Calu3 (cell line): ENCODE measurements at regions of chr3 and their contacts with region 1.

Region 1: GRCh38 chr3:17841190-17841828 is 98.9 kb upstream of the TBC1D5 start:
- DNase-seq: peak; percentile 85
- H3K4me3 Mint-ChIP-seq: no peak overlapping the region
- H3K27ac Mint-ChIP-seq: no peak overlapping the region
- H3K4me1 Mint-ChIP-seq: no peaks in the 10 kb centered on the region
- H3K27me3 Mint-ChIP-seq: no peaks in the 10 kb centered on the region
- CTCF ChIP-seq: peak; percentile 67

Region 2: GRCh38 chr3:17258823-17259436 is 582.4 kb before region 1 on chr3:
- CTCF ChIA-PET with region 1: no interaction called
- intact Hi-C with region 1: loop called (anchors 2 kb)
- DNase-seq: peak; percentile 3
- H3K4me3 Mint-ChIP-seq: no peak overlapping the region
- H3K27ac Mint-ChIP-seq: no peak overlapping the region
- H3K4me1 Mint-ChIP-seq: no peaks in the 10 kb centered on the region
- H3K27me3 Mint-ChIP-seq: no peaks in the 10 kb centered on the region
- CTCF ChIP-seq: peak; percentile 40

Region 3: GRCh38 chr3:17307482-17307881 is 533.8 kb before region 1 on chr3:
- CTCF ChIA-PET with region 1: no interaction called
- intact Hi-C with region 1: no loop called
- DNase-seq: no peak
- H3K4me3 Mint-ChIP-seq: no peak overlapping the region
- H3K27ac Mint-ChIP-seq: no peak overlapping the region
- H3K4me1 Mint-ChIP-seq: no peaks in the 10 kb centered on the region
- H3K27me3 Mint-ChIP-seq: no peaks in the 10 kb centered on the region
- CTCF ChIP-seq: no peak

Region 4: GRCh38 chr3:17431004-17431403 is 410.3 kb before region 1 on chr3:
- CTCF ChIA-PET with region 1: interaction called, 10 read pairs
- intact Hi-C with region 1: loop called (anchors 1 kb)
- DNase-seq: no peak
- H3K4me3 Mint-ChIP-seq: no peak overlapping the region
- H3K27ac Mint-ChIP-seq: no peak overlapping the region
- H3K4me1 Mint-ChIP-seq: no peaks in the 10 kb centered on the region
- H3K27me3 Mint-ChIP-seq: no peaks in the 10 kb centered on the region
- CTCF ChIP-seq: peak; percentile 18

Region 5: DNA sequence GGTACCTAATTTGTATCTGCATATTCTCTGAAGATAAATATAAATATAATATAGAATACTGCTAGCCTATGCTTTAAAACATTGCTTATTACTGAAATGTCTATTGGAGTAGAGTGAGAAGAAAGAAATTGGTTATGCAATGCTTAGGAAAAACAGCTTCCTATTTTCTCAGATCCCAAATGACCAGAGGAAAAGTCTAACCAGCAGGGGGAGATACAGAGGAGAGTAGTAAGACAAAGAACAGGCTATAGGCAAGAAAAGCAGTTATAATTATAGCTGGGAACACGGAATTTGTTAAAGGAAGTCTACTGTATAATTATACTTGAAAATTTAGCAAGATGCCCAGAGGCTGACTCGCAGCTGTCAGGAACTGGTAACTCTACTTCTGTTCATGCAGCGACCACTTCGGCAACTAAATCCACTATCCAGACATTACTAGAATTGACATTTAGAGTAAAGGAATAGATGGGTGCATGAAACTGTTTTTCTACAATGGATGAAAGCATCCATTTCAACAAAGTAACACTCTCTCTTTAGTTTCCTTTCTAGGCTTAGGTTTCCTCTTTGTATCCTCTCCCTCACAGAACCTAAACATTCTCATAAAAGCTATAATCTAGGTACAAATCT is 196.1 kb before region 1 on chr3:
- CTCF ChIA-PET with region 1: interaction called, 27 read pairs
- intact Hi-C with region 1: loop called (anchors 1 kb)
- DNase-seq: peak; percentile 40
- H3K4me3 Mint-ChIP-seq: no peak overlapping the region
- H3K27ac Mint-ChIP-seq: no peak overlapping the region
- H3K4me1 Mint-ChIP-seq: no peaks in the 10 kb centered on the region
- H3K27me3 Mint-ChIP-seq: no peaks in the 10 kb centered on the region
- CTCF ChIP-seq: peak; percentile 48

Region 6: GRCh38 chr3:17775073-17775472 is 66.2 kb before region 1 on chr3:
- CTCF ChIA-PET with region 1: interaction called, 5 read pairs
- intact Hi-C with region 1: loop called (anchors 2 kb)
- DNase-seq: no peak
- H3K4me3 Mint-ChIP-seq: no peak overlapping the region
- H3K27ac Mint-ChIP-seq: no peak overlapping the region
- H3K4me1 Mint-ChIP-seq: peaks cover 8% of the 10 kb centered on the region
- H3K27me3 Mint-ChIP-seq: peaks cover 10% of the 10 kb centered on the region
- CTCF ChIP-seq: no peak

Region 7: DNA sequence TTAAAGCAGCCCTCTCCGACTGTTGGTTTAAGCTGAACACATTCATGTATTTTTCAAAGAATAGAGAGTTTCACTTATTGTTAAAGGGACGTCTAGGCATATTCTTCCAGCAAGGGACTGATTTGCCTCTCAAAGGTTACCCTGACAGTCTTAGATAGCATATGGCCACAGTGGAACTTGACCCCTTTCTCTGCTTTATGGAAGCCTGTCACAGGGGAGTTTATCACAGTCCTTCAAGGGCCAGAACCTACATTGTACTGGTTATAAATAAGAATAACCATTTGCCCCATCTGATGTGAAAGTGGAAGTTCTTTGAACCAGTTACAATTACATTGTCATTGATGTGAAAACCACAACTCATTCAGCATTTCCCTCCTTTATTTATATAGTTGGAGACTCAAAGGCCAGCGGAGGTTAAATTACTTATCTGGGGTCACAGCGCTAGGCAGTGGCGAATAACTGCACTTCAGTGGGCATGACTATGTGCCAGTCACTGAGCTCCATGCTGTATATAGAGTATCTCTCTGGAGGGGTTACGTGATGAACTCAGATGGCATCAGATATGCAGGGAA is 38.4 kb before region 1 on chr3:
- CTCF ChIA-PET with region 1: no interaction called
- intact Hi-C with region 1: no loop called
- DNase-seq: no peak
- H3K4me3 Mint-ChIP-seq: no peak overlapping the region
- H3K27ac Mint-ChIP-seq: no peak overlapping the region
- H3K4me1 Mint-ChIP-seq: peaks cover 10% of the 10 kb centered on the region
- H3K27me3 Mint-ChIP-seq: no peaks in the 10 kb centered on the region
- CTCF ChIP-seq: no peak

Region 8: DNA sequence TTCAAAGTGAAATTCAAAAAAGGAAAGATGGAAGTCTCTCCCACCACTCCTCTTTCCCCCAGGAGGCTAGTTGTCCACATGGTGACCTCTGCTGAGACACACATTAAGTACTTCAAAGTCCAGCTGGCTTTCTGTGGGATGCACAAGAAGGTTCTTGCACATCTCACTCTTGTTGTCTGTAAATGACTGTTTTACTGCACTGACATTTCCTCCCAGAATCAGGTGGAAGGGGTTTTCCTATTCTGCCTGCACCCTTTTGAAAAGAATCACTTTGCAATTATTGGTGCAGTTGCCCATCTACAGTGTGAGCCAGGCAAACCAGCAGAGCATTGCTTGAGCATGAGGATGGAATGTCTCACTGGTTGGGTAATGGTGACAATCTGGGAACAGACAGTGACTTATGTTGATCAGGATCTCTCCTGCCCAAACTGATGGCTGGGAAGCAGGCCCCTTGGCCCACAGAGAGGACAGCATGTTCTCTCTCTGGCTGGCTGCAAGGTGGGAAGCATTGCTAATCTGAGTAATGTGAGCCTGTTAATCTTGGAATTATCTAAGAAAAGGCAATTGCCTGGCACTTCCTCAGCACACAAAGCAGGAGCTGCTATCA is 931.5 kb after region 1 on chr3:
- CTCF ChIA-PET with region 1: no interaction called
- intact Hi-C with region 1: no loop called
- DNase-seq: no peak
- H3K4me3 Mint-ChIP-seq: no peak overlapping the region
- H3K27ac Mint-ChIP-seq: no peak overlapping the region
- H3K4me1 Mint-ChIP-seq: no peaks in the 10 kb centered on the region
- H3K27me3 Mint-ChIP-seq: no peaks in the 10 kb centered on the region
- CTCF ChIP-seq: no peak